ENCODE measurements at regions of chrX and their contacts with region 1.

Region 1: GRCh38 chrX:48521353-48522243 is at the start of gene EBP:
- DNase-seq: peak; percentile 96
- H3K4me3 Mint-ChIP-seq: peak within 1 kb of the TSS; percentile 91
- H3K27ac Mint-ChIP-seq: peak within 1 kb of the TSS; percentile 99
- H3K4me1 Mint-ChIP-seq: peaks cover 44% of the 10 kb centered on the region
- H3K27me3 Mint-ChIP-seq: no peaks in the 10 kb centered on the region
- total RNA-seq, gene EBP: 446 to 461 TPM

Region 2: GRCh38 chrX:48475774-48476577 is 45.6 kb before region 1 on chrX and contains the start of gene FTSJ1:
- CTCF ChIA-PET with region 1: no interaction called
- POLR2A ChIA-PET with region 1: interaction called, 14 read pairs
- DNase-seq: peak; percentile 91
- H3K4me3 Mint-ChIP-seq: peak within 1 kb of the TSS; percentile 91
- H3K27ac Mint-ChIP-seq: peak within 1 kb of the TSS; percentile 85
- H3K4me1 Mint-ChIP-seq: peaks cover 37% of the 10 kb centered on the region
- H3K27me3 Mint-ChIP-seq: no peaks in the 10 kb centered on the region
- total RNA-seq, gene FTSJ1: 57.6 to 60.1 TPM

Region 3: GRCh38 chrX:48508400-48509244 is 13.0 kb before region 1 on chrX and contains the start of gene PORCN:
- CTCF ChIA-PET with region 1: no interaction called
- POLR2A ChIA-PET with region 1: interaction called, 11 read pairs
- DNase-seq: peak; percentile 82
- H3K4me3 Mint-ChIP-seq: peak within 1 kb of the TSS; percentile 81
- H3K27ac Mint-ChIP-seq: peak within 1 kb of the TSS; percentile 47
- H3K4me1 Mint-ChIP-seq: peaks cover 33% of the 10 kb centered on the region
- H3K27me3 Mint-ChIP-seq: no peaks in the 10 kb centered on the region
- total RNA-seq, gene PORCN: 26.1 to 29.2 TPM

Region 4: DNA sequence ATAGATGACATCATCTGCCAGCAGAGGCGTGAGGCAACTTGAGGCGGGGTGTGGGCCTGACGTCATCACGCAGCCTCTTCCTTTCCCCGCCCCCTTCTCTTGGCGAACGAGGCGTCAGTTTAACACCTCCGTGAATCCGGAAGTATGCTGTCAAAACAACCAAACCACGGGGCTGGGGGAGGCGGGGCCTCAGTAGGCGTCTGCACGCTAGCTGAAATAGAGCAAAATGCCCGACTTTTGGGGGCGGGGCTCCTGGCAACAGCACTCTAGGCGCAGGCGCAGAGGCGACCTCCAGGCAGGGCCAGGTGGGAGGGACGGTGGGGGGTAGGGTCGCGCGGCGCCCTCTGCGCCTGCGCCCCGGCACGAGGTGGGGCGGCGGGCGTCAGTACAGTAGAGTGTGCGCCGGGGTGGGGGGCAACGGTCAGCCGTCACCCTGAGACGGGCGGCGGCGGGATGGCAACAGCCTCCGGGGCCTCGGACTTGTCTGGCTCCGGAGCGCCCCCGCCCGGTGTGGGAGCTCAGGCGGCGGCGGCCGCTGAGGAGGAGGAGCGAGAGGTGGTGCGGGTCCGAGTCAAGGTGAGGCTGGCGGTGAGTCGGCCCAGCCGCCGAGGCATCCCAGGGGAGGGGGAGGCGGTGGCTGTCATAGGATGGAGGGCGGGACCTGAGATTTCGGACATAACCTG is 17.9 kb after region 1 on chrX and contains the start of gene TBC1D25:
- CTCF ChIA-PET with region 1: interaction called, 7 read pairs
- POLR2A ChIA-PET with region 1: interaction called, 33 read pairs
- DNase-seq: peak; percentile 97
- H3K4me3 Mint-ChIP-seq: peak within 1 kb of the TSS; percentile 93
- H3K27ac Mint-ChIP-seq: peak within 1 kb of the TSS; percentile 95
- H3K4me1 Mint-ChIP-seq: peaks cover 29% of the 10 kb centered on the region
- H3K27me3 Mint-ChIP-seq: no peaks in the 10 kb centered on the region
- total RNA-seq, gene TBC1D25: 21.7 to 22.3 TPM

Region 5: DNA sequence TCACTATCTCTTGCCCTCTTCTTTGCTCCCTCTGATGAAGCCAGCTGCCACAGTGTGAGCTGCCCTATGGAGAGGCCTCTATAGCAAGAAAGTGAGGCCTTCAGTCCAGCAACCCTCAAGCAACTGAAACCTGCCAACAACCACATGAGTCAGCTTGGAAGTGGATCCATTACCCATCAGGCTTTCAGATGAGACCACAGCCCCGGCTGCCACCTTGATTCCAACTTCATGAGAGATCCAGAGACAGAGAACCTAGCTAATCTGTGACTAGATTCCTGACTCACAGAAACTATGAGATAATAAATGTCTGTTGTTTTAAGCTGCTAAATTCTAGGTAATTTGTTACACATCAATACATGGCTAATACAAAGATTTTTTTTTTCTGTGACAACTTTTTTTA is 141.6 kb after region 1 on chrX:
- CTCF ChIA-PET with region 1: no interaction called
- POLR2A ChIA-PET with region 1: no interaction called
- DNase-seq: no peak
- H3K4me3 Mint-ChIP-seq: no peak overlapping the region
- H3K27ac Mint-ChIP-seq: no peak overlapping the region
- H3K4me1 Mint-ChIP-seq: peaks cover 6% of the 10 kb centered on the region
- H3K27me3 Mint-ChIP-seq: no peaks in the 10 kb centered on the region

Measured in activated CD4-positive, alpha-beta memory T cell treated with anti-CD3 and anti-CD28 coated beads, Interleukin-2, amount 10 ng/mL, durations not matched to agents 7 days and 5 days (primary cell).